ENCODE measurements at regions of chr9 and their contacts with region 1.

Region 1: GRCh38 chr9:126500684-126501382 is 112.9 kb upstream of the LMX1B start:
- DNase-seq: peak; percentile 63 to 81
- H3K4me3 ChIP-seq: peak overlapping the region in 1 of 3 donors; percentile 25
- H3K27ac ChIP-seq: no peak overlapping the region
- H3K4me1 ChIP-seq: peaks cover 0 to 9% of the 10 kb centered on the region in 2 donors
- H3K27me3 ChIP-seq: no peaks in the 10 kb centered on the region
- CTCF ChIP-seq: peak; percentile 86 to 96 (median 94)
- POLR2A ChIP-seq: no peak

Region 2: GRCh38 chr9:125922854-125923253 is 578.0 kb before region 1 on chr9:
- intact Hi-C with region 1: loop called (anchors 5 kb)
- DNase-seq: no peak
- H3K4me3 ChIP-seq: no peak overlapping the region
- H3K27ac ChIP-seq: no peak overlapping the region
- H3K4me1 ChIP-seq: no peaks in the 10 kb centered on the region
- H3K27me3 ChIP-seq: no peaks in the 10 kb centered on the region
- CTCF ChIP-seq: no peak
- POLR2A ChIP-seq: no peak

Region 3: DNA sequence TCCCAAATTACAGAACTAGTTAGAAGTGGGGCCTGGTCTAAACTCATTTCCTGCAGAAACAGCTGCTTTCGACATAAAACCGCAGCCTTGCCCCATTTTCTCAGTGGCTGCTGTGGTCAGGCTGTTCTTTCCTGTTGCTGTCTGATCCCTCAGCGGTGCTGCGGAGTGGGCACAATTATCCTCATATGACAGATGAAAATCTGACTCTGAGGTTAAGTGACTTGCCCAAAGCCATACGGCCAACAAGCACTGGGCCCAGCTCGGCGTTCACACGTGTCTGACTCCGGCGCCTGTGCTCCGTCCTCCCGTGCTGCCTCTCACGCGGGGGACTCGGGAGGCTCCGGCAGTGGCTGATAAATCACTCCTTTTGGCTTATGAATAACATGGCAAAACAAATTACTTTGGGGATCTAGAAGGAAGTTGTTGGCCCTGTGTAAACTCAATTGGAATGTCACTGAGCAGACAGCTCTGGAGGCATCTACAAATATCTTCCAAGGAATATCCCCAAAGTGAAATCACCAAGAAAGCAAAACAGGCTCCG is 29.7 kb before region 1 on chr9:
- intact Hi-C with region 1: no loop called
- DNase-seq: peak in 1 of 2 donors; percentile 42
- H3K4me3 ChIP-seq: no peak overlapping the region
- H3K27ac ChIP-seq: no peak overlapping the region
- H3K4me1 ChIP-seq: no peaks in the 10 kb centered on the region
- H3K27me3 ChIP-seq: no peaks in the 10 kb centered on the region
- CTCF ChIP-seq: no peak
- POLR2A ChIP-seq: no peak

Region 4: GRCh38 chr9:126482361-126483044 is 18.3 kb before region 1 on chr9:
- intact Hi-C with region 1: no loop called
- DNase-seq: no peak
- H3K4me3 ChIP-seq: no peak overlapping the region
- H3K27ac ChIP-seq: no peak overlapping the region
- H3K4me1 ChIP-seq: no peaks in the 10 kb centered on the region
- H3K27me3 ChIP-seq: no peaks in the 10 kb centered on the region
- CTCF ChIP-seq: no peak
- POLR2A ChIP-seq: no peak

Region 5: GRCh38 chr9:126522942-126523341 is 22.1 kb after region 1 on chr9:
- intact Hi-C with region 1: loop called (anchors 1 kb)
- DNase-seq: no peak
- H3K4me3 ChIP-seq: no peak overlapping the region
- H3K27ac ChIP-seq: no peak overlapping the region
- H3K4me1 ChIP-seq: no peaks in the 10 kb centered on the region
- H3K27me3 ChIP-seq: peaks cover 0 to 14% of the 10 kb centered on the region in 2 donors
- CTCF ChIP-seq: no peak
- POLR2A ChIP-seq: no peak

Region 6: DNA sequence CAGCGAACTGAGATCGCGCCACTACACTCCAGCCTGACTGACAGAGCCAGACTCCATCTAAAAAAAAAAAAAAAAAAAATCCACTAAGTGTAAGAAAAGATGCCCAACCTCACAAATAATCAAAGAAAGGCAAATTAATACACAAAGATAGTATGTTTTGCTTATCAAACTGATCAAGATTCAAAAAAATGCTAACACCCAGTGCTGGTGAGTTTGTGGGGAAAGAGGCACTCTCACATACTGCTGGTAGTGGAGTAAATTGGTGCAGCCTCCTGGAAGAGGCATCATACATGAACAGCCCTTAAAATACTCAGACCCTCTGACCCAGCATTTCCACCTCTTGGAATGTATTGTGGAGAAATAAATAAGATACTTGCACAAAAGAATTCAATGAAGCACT is 42.7 kb after region 1 on chr9:
- intact Hi-C with region 1: loop called (anchors 1 kb)
- DNase-seq: no peak
- H3K4me3 ChIP-seq: no peak overlapping the region
- H3K27ac ChIP-seq: no peak overlapping the region
- H3K4me1 ChIP-seq: no peaks in the 10 kb centered on the region
- H3K27me3 ChIP-seq: peaks cover 0 to 3% of the 10 kb centered on the region in 2 donors
- CTCF ChIP-seq: no peak
- POLR2A ChIP-seq: no peak

Region 7: GRCh38 chr9:126558051-126558665 is 57.3 kb after region 1 on chr9:
- intact Hi-C with region 1: loop called (anchors 5 kb)
- DNase-seq: peak; percentile 57 to 76
- H3K4me3 ChIP-seq: no peak overlapping the region
- H3K27ac ChIP-seq: no peak overlapping the region
- H3K4me1 ChIP-seq: no peaks in the 10 kb centered on the region
- H3K27me3 ChIP-seq: peaks cover 0 to 9% of the 10 kb centered on the region in 2 donors
- CTCF ChIP-seq: peak; percentile 85 to 89 (median 88)
- POLR2A ChIP-seq: no peak

Region 8: GRCh38 chr9:126581893-126582292 is 81.1 kb after region 1 on chr9:
- intact Hi-C with region 1: no loop called
- DNase-seq: peak in 1 of 2 donors; percentile 58
- H3K4me3 ChIP-seq: peak overlapping the region in 1 of 3 donors; percentile 35
- H3K27ac ChIP-seq: no peak overlapping the region
- H3K4me1 ChIP-seq: peaks cover 0 to 6% of the 10 kb centered on the region in 2 donors
- H3K27me3 ChIP-seq: no peaks in the 10 kb centered on the region
- CTCF ChIP-seq: no peak
- POLR2A ChIP-seq: no peak

Measured in breast epithelium (tissue), 4 donors.